Activated naive CD4-positive, alpha-beta T cell treated with anti-CD3 and anti-CD28 coated beads for 36 hours (primary cell): ENCODE measurements at regions of chr9 and their contacts with region 1.

Region 1: DNA sequence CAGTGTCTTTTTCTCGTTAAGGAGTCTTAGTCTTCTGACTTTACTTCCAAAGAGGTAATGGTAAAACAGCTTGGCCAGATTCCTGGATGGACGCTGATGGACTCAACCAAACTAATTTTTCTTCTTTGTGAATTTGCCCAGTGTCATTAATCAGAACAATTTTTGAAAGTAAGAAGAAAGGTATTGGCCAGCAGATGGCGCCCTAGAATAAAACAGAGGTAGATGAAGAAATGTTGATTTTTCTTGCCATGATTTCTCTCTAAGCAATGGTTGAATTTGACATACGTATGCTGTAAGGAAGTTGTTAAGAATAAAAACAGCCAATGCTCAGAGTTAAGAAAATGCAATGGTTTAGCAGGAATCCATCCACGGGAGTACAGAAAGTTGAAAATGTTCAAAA is 500.0 kb downstream of the DIRAS2 start:
- DNase-seq: peak; percentile 77
- H3K4me3 Mint-ChIP-seq: no peak overlapping the region
- H3K27ac Mint-ChIP-seq: no peak overlapping the region
- H3K4me1 Mint-ChIP-seq: peaks cover 2% of the 10 kb centered on the region
- H3K27me3 Mint-ChIP-seq: peaks cover 7% of the 10 kb centered on the region

Region 2: DNA sequence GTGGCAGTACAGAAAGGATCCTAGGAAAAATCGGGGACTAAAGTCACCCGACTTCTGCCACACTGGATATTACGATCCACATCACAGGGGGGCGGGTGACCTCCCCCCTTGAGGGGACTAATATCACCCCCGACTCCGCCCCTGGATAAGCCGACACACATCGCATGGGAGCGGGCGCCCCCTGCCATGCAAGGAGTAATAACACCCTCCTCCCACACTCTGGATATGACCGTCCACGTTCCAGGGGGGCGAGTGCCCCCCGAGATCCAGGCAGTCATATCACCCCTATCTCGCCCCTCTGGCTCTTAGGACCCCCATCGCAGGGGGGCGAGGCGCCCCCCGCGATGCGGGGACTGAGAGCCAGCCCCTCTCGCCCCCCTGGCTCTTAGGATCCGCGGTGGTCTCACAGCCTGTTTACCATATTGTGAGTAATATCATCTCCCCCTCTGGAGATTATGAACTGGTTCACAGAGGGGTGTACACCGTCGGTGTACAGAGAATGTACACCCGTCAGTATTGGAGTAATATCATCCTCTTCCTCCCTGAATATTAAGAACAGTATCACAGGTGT is 77.1 kb after region 1 on chr9:
- CTCF ChIA-PET with region 1: no interaction called
- intact Hi-C with region 1: loop called (anchors 2 kb)
- DNase-seq: peak; percentile 35
- H3K4me3 Mint-ChIP-seq: no peak overlapping the region
- H3K27ac Mint-ChIP-seq: no peak overlapping the region
- H3K4me1 Mint-ChIP-seq: no peaks in the 10 kb centered on the region
- H3K27me3 Mint-ChIP-seq: peaks cover 4% of the 10 kb centered on the region

Region 3: DNA sequence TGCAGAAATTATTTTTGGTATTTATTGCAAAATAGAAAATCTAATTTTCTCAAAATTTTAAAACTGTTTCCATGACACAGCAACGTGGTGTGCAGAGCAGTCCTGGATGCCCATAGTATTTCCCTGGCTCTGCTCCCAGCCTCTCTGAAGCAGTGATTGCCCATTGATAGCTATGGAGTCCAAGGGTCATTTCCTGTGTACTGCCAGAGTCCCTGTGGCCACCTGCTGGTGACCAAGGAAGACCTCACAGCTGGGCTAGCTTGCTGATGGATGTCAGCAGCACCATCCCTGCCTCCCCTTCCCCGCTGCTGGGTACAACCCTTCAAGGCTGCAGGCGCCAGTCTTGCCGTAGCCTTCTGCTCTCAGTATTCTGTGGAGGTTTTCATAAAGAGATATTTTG is 315.9 kb after region 1 on chr9:
- CTCF ChIA-PET with region 1: no interaction called
- intact Hi-C with region 1: no loop called
- DNase-seq: no peak
- H3K4me3 Mint-ChIP-seq: no peak overlapping the region
- H3K27ac Mint-ChIP-seq: no peak overlapping the region
- H3K4me1 Mint-ChIP-seq: no peaks in the 10 kb centered on the region
- H3K27me3 Mint-ChIP-seq: peaks cover 23% of the 10 kb centered on the region

Region 4: GRCh38 chr9:90870621-90871326 is 728.2 kb after region 1 on chr9:
- CTCF ChIA-PET with region 1: no interaction called
- intact Hi-C with region 1: loop called (anchors 5 kb)
- DNase-seq: peak; percentile 67
- H3K4me3 Mint-ChIP-seq: no peak overlapping the region
- H3K27ac Mint-ChIP-seq: no peak overlapping the region
- H3K4me1 Mint-ChIP-seq: no peaks in the 10 kb centered on the region
- H3K27me3 Mint-ChIP-seq: peaks cover 7% of the 10 kb centered on the region